ENCODE measurements at regions of chr19 and their contacts with region 1.

Region 1: DNA sequence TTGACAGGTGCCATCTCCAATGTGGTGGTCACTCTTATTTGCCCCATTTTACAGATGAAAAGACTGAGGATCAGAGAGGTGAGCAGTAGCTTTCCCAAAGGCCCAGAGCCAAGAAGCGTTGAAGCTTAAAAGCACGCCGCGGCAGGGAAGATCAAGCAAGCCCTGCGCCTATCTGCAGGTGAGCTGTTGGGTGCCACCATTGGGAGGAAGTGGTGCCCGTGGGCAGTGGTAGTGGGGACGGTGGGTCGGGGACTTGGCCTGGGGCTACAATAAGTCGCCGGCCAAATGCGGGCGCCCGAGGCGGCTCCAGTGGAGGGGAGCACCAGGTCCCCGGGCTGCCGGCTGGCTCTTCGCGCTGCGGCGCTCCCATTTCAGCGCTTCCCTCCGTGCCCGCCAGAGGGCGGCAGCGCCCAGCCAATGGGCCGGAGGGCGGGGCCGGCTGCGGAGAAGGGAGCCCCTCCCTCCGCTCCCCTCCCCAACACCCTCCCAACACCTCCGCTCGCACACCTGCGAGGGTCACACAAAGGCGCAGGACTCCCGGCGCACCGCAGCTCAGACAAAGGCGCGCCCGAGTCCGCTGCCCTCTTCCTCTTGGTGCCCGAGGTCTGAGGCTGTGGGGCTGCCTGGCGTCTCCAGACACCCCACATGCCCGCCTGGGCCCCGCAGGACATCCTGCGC is 744 bp upstream of the POU2F2 start:
- DNase-seq: peak; percentile 68 to 80
- ATAC-seq: peak; percentile 82 to 96 (median 86)
- H3K4me3 ChIP-seq: peak overlapping the region; percentile 49
- H3K27ac ChIP-seq: no peak overlapping the region
- H3K4me1 ChIP-seq: peaks cover 3% of the 10 kb centered on the region
- H3K27me3 ChIP-seq: peaks cover 0 to 30% (median 12%) of the 10 kb centered on the region in 3 donors
- CTCF ChIP-seq: peak; percentile 95

Region 2: DNA sequence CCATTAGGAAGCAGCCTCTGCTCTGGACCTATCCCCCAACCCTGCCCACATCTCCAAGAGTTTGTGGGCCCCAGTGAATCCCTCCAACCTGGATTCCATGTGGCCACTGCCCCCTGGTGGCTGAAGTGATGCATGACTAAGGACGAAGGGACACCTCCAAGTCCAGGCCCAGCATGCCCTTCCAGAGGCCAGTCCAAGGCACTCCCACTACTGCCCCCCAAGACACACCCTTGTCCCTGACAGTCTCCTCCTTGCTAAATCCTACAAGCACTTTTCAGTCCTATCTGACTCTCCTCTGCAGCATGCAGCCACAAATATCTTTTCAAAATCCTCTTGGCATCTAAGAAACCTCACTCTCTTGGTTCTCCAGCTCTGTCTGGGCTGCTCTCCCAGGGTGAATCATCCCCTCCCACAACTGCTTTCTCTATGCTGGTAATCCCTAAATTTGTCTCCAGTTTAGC is 51.4 kb after region 1 on chr19:
- intact Hi-C with region 1: loop called in 1 of 2 experiments (anchors 2 kb)
- DNase-seq: peak; percentile 72 to 80
- ATAC-seq: peak; percentile 46 to 78 (median 66)
- H3K4me3 ChIP-seq: no peak overlapping the region
- H3K27ac ChIP-seq: no peak overlapping the region
- H3K4me1 ChIP-seq: no peaks in the 10 kb centered on the region
- H3K27me3 ChIP-seq: peaks cover 3 to 39% (median 3%) of the 10 kb centered on the region in 3 donors
- CTCF ChIP-seq: peak; percentile 76

Region 3: DNA sequence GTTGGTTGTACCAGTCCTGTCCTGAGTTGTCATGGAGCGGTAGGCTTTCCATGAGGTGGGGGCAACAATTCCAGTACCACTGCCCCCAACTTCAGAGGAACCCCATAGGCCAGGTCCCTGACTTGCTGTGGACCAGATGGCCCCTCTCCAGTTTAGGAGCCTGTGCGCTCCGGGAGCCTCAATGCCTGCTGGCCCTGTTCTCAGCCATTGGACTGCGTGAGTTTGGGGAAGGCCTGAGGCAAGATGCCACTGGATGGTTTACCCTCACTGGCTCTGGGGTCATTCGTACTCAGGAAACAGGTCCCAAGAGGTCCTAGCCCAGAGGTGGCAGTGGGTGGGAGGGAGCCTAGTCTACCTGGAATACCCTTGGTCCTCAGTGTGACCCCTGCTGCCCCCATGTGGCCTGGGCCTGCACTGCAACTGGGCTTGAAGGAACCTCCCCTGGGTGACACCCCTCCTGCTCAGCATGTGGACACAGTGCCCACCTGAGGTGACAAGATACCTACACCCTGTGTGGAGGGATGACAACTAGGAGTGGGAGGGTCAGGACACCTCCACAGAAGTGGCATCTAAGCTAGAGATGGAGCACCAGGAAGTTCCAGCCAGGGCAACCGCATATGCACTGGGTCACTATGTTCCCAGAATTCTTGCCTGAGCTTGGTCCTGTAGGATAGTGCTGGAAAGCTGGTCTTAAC is 163.0 kb after region 1 on chr19:
- intact Hi-C with region 1: loop called (anchors 5 to 10 kb)
- DNase-seq: peak; percentile 82 to 91
- ATAC-seq: peak; percentile 79 to 87 (median 84)
- H3K4me3 ChIP-seq: no peak overlapping the region
- H3K27ac ChIP-seq: no peak overlapping the region
- H3K4me1 ChIP-seq: no peaks in the 10 kb centered on the region
- H3K27me3 ChIP-seq: no peaks in the 10 kb centered on the region
- CTCF ChIP-seq: peak; percentile 91

Region 4: DNA sequence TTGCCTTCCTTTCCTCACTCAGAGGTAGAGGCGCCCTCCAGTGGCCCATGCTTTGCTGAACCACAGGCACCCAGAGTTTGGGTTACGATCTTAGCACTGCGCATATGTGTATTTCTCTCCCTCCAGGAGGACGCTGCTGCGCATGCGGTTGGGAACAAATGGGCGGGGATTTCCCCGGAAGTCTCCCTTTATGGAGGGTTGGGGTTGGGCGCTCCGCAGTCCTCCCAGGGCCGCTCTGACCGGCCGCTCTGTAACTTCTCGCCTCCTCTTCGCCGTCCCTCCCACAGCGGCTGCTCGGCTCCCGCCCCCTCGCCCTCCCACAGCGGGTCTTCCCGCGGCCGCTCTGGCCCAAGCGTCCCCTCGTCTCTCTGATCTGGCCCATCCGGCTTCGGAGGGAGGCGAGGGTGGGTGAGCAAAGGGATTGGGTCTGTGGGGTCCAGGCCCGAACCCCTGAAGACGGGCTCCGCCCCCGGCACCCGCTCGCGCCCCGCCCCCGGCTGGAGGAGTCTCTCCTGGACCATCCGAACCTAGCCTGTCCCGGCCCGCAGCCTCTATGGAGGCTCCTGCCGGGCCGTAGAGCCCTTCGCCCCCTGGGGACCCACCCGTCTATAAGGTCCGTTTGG is 192.4 kb after region 1 on chr19 and contains the start of gene MEGF8:
- intact Hi-C with region 1: loop called in 1 of 2 experiments (anchors 5 kb)
- DNase-seq: peak; percentile 97 to 99
- ATAC-seq: peak; percentile 97
- H3K4me3 ChIP-seq: peak within 1 kb of the TSS; percentile 91
- H3K27ac ChIP-seq: peak within 1 kb of the TSS; percentile 77
- H3K4me1 ChIP-seq: peaks cover 17% of the 10 kb centered on the region
- H3K27me3 ChIP-seq: peaks cover 0 to 22% (median 14%) of the 10 kb centered on the region in 3 donors
- CTCF ChIP-seq: peak; percentile 83
- total RNA-seq, gene MEGF8: 7.9 to 21.1 (median 16.8) TPM

Region 5: DNA sequence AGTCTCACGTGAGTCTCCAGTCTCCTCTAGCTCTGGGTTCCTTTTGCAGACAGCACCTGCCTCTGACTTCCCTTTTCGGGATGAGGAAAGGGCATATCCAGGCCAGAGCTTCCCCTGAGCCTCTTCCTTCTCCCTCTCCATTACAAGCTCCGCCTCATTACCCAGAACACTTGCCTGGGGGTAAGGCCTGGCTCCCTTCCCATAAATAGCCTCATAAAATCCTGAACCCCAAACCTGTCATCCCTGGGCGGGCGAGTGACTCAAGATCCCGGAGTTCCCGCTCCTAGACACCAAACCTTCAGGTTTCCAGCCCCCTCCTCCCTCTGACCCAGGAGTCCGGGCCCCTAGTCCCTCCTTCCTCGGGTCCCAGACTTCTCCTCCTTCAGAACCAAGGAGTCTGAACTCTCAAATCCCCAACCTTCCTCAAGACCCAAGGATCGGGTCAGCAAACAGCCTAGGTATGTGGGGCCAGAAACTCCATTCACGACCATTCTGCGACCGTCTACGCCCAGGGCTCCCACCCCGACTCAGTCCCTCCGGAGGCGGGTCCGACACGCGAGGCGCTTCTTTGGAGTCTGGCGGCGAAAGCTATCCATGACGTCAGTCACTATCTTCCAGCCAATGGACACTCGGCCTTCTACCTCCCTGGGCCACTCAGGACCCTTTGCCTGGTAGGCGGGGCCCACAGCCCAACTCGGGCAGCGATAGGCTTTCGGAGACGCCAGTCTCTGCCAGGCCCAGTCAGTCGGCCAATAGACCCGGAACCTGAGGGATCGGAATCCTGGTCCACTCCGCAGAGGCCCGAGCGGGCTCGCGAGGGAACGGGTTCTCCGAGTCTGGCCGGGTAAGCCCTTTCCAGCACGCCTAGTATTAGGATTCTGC is 263.6 kb after region 1 on chr19:
- intact Hi-C with region 1: loop called in 1 of 2 experiments (anchors 10 kb)
- DNase-seq: peak; percentile 98 to 99
- ATAC-seq: peak; percentile 98
- H3K4me3 ChIP-seq: peak overlapping the region; percentile 77
- H3K27ac ChIP-seq: peak overlapping the region; percentile 71
- H3K4me1 ChIP-seq: peaks cover 15% of the 10 kb centered on the region
- H3K27me3 ChIP-seq: no peaks in the 10 kb centered on the region
- CTCF ChIP-seq: no peak

Region 6: DNA sequence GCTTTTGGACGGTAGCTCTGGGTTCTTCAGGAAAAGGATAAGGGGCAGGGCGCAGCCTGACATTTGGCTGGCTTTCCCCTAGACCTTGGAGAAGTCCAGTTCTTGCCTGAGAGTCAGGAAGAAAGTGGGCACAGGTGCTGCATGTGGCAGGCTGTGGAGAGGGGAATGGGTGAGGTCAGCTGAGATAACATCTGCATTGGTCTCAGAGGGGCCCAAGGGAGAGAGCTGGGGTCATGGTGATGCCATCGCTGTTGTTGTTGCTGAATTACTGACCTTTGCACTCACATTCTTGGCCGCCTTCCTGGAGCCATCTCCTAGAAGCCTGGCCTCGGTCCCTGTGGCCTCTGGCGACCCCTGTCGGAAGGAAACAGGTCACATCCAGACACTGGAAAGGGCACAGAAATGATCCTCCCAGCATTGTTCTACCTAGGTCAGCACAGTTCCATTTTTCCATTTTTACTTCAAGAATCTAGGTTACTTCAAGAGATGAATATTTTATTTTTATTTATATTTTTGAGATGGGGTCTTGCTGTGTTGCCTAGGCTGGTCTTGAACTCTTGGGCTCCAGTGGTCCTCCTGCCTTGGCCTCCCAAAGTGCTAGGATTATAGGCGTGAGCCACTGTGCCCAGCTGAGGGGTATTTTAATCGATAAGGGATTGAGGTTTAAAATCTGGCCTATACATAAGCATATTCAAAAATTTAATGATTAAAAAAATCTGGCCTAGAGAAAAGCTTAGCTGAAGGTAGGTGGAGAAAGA is 300.7 kb after region 1 on chr19:
- intact Hi-C with region 1: loop called in 1 of 2 experiments (anchors 10 kb)
- DNase-seq: peak; percentile 83 to 91
- ATAC-seq: peak; percentile 44 to 89 (median 79)
- H3K4me3 ChIP-seq: no peak overlapping the region
- H3K27ac ChIP-seq: peak overlapping the region; percentile 9
- H3K4me1 ChIP-seq: no peaks in the 10 kb centered on the region
- H3K27me3 ChIP-seq: no peaks in the 10 kb centered on the region
- CTCF ChIP-seq: peak; percentile 56